Calu3 (cell line): ENCODE measurements at regions of chr1 and their contacts with region 1.

Region 1: GRCh38 chr1:92583821-92584760 is 97.4 kb upstream of the GFI1 start:
- DNase-seq: no peak
- H3K4me3 Mint-ChIP-seq: no peak overlapping the region
- H3K27ac Mint-ChIP-seq: no peak overlapping the region
- H3K4me1 Mint-ChIP-seq: peaks cover 10% of the 10 kb centered on the region
- H3K27me3 Mint-ChIP-seq: no peaks in the 10 kb centered on the region
- CTCF ChIP-seq: no peak

Region 2: DNA sequence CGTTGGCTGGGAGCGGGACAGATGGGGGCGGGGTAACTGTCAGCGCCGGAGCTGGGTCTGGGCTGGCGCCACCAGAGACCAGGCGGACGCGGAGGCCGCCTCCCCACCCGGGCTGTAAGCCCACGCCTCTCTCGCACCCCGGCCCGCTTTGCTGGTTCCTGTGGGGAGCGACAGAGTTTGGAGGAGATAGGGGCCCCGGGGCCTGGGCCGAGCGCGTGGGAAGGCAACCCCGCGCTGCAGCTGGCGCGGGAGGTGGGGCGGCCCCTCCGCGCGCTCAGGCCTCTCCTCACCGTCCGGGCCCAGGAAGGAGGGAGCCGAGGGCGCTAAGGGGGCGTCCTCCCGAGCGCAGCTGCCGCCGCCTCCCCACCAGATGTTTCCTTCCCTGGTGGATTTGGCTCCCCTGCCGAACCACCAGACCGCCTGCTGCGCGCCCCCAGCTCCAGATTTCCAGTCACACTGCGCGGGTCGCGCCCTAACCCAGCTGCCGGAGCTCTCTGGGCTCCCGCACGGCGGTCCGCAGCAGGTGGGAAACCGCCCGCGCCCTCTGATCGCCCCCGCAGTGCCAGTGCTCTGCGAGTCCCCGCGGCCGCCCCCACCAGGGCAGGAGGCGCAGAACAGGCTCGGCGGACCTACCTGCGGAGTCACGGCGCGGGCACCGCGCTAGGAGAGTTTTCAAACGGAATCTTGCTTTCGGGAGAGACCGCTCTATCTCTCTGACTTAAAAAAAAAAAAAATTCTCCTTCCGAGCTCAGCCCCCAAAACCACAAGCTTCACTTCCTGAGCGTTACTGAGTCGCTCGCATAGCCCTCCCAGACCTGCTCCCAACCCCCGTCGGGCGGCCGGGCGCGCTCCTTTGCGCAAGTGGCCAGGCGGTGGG is 98.5 kb before region 1 on chr1:
- CTCF ChIA-PET with region 1: no interaction called
- intact Hi-C with region 1: loop called (anchors 10 kb)
- DNase-seq: peak; percentile 84
- H3K4me3 Mint-ChIP-seq: peak overlapping the region; percentile 75
- H3K27ac Mint-ChIP-seq: no peak overlapping the region
- H3K4me1 Mint-ChIP-seq: peaks cover 20% of the 10 kb centered on the region
- H3K27me3 Mint-ChIP-seq: peaks cover 85% of the 10 kb centered on the region
- CTCF ChIP-seq: peak; percentile 64

Region 3: DNA sequence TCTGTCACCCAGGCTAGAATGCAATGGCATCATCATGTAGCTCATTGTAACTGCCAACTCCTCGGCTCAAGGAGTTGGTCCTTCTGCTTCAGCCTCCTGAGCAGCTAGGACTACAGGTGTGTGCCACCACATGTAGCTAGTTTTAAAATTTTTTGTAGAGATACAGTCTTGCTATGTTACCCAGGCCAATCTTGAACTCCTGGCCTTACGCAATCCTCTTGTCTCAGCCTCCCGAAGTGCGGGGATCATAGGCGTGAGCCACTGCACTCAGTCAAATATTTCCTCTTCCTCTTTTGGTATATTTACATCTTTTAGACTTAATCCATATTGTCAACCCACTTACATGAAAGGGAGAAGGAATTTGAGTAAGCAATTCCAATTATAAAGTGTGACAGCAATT is 79.7 kb after region 1 on chr1:
- CTCF ChIA-PET with region 1: no interaction called
- intact Hi-C with region 1: no loop called
- DNase-seq: no peak
- H3K4me3 Mint-ChIP-seq: no peak overlapping the region
- H3K27ac Mint-ChIP-seq: no peak overlapping the region
- H3K4me1 Mint-ChIP-seq: peaks cover 9% of the 10 kb centered on the region
- H3K27me3 Mint-ChIP-seq: no peaks in the 10 kb centered on the region
- CTCF ChIP-seq: no peak